Activated T-helper 2 cell treated with anti-CD3 and anti-CD28 coated beads, Interferon-gamma antibody, Interleukin-2, Interleukin-4, amounts not matched to agents 10 μg/mL and 5 μg/mL and 100 μg/mL, durations not matched to agents 14 hours and 24 hours and 36 hours (primary cell): ENCODE measurements at regions of chr17 and their contacts with region 1.

Region 1: GRCh38 chr17:39164675-39165143 is 1.3 kb downstream of the ARL5C start:
- DNase-seq: peak; percentile 68
- H3K4me3 Mint-ChIP-seq: peak overlapping the region; percentile 86
- H3K27ac Mint-ChIP-seq: peak overlapping the region; percentile 13
- H3K4me1 Mint-ChIP-seq: peaks cover 14% of the 10 kb centered on the region
- H3K27me3 Mint-ChIP-seq: peaks cover 30% of the 10 kb centered on the region

Region 2: GRCh38 chr17:39235555-39236449 is 71.1 kb after region 1 on chr17:
- intact Hi-C with region 1: loop called (anchors 10 kb)
- DNase-seq: peak; percentile 45
- H3K4me3 Mint-ChIP-seq: no peak overlapping the region
- H3K27ac Mint-ChIP-seq: no peak overlapping the region
- H3K4me1 Mint-ChIP-seq: peaks cover 20% of the 10 kb centered on the region
- H3K27me3 Mint-ChIP-seq: peaks cover 3% of the 10 kb centered on the region